ENCODE measurements at regions of chr1 and their contacts with region 1.

Region 1: DNA sequence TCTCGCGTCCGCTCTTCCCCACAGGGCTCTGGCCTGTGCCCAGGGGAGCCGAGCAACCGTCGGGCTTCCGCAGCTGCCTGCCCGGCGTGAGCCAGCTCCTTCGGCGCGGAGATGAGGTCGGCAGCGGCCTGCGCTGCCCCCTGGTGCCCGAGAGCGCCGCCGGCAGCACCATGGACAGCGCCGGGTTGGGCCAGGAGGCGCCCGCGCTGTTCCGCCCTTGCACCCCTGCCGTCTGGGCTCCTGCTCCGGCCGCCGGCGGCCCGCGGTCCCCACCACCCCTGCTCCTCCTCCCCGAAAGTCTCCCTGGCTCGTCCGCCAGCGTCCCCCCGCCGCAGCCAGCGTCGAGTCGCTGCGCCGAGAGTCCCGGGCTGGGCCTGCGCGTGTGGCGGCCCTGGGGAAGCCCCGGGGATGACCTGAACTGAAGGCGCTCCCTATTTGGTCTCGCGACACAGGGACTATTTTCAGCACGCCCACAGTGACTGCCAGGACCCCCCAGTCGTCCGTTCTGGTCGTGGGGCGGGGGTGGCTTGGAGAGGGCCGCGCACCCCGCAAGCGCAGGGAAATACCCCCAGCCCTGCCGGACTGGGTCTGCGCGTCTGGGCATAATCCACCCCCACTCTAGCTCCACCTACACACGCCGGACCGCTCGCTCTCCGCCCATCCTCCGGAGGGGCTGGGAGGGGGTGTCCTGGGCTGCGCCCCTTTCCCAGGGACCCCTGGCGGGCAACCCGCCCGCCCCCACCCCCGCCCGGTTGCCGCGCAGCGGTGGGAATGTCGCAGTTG is 1.3 kb downstream of the HES3 start:
- DNase-seq: peak; percentile 86
- ATAC-seq: peak; percentile 70 to 79

Region 2: GRCh38 chr1:6108937-6109614 is 136.2 kb before region 1 on chr1:
- intact Hi-C with region 1: loop called in 1 of 2 experiments (anchors 10 kb)
- DNase-seq: no peak
- ATAC-seq: peak in 1 of 2 donors; percentile 43

Region 3: GRCh38 chr1:6343506-6344405 is 98.5 kb after region 1 on chr1:
- intact Hi-C with region 1: loop called (anchors 1 to 2 kb)
- DNase-seq: peak; percentile 69
- ATAC-seq: peak; percentile 85 to 90

Region 4: GRCh38 chr1:6401673-6402072 is 156.4 kb after region 1 on chr1:
- intact Hi-C with region 1: loop called (anchors 2 to 10 kb)
- DNase-seq: no peak
- ATAC-seq: no peak

Measured in left cardiac atrium (tissue), 4 donors.